Activated CD8-positive, alpha-beta T cell treated with anti-CD3 and anti-CD28 coated beads, Interleukin-2, amount 10 ng/mL, durations not matched to agents 7 days and 5 days (primary cell): ENCODE measurements at regions of chr12 and their contacts with region 1.

Region 1: GRCh38 chr12:46124848-46125619 is 134.7 kb upstream of the SCAF11 start:
- DNase-seq: peak; percentile 78
- ATAC-seq: peak; percentile 87
- H3K4me3 Mint-ChIP-seq: no peak overlapping the region
- H3K27ac Mint-ChIP-seq: no peak overlapping the region
- H3K4me1 Mint-ChIP-seq: peaks cover 7% of the 10 kb centered on the region
- H3K27me3 Mint-ChIP-seq: peaks cover 29% of the 10 kb centered on the region

Region 2: GRCh38 chr12:45010059-45010458 is 1115.0 kb before region 1 on chr12:
- CTCF ChIA-PET with region 1: no interaction called
- POLR2A ChIA-PET with region 1: no interaction called
- DNase-seq: no peak
- ATAC-seq: no peak
- H3K4me3 Mint-ChIP-seq: no peak overlapping the region
- H3K27ac Mint-ChIP-seq: no peak overlapping the region
- H3K4me1 Mint-ChIP-seq: no peaks in the 10 kb centered on the region
- H3K27me3 Mint-ChIP-seq: peaks cover 7% of the 10 kb centered on the region

Region 3: DNA sequence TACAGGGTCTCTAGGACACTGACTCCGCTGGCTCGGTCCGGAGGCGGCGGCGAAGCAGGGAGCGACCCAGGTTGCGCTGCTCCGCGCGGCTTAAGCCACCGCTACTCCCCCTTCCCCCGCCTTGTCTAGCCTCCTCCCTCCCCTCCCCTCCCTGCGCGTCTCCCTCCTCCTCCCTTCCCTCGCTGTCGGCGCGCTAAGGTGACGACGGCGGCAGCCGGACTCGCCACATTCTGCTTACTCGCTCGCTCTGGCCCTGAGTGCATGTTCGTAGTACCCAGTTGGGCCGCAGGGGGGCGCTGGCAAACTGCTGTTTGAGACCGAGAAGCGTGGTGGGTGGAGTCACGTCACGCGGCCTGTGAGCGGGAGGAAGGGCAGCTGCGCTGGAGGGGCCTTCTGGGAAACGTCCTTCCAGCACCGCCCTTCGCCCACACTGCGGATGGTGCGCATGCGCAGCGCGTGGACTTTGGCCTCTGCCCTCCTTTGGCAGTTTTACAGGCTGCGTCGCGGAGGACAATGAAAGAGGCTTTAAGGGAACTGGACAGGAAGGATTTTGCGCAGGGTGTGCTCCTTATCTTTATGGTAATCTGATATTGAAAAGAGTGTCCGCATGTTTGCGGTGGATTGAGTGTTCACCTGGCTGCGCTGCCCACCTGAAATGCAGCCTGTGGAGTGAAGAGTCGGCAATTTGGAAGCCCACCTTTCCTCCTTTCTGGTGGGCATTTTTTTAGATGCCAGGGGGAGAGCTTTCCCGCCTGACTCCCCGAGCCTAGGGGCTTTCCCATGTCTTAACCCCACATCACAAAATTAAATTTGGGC is 134.4 kb before region 1 on chr12 and contains the start of gene SCAF11:
- CTCF ChIA-PET with region 1: interaction called, 21 read pairs
- POLR2A ChIA-PET with region 1: no interaction called
- DNase-seq: peak; percentile 100
- ATAC-seq: peak; percentile 83
- H3K4me3 Mint-ChIP-seq: peak within 1 kb of the TSS; percentile 95
- H3K27ac Mint-ChIP-seq: peak within 1 kb of the TSS; percentile 99
- H3K4me1 Mint-ChIP-seq: peaks cover 46% of the 10 kb centered on the region
- H3K27me3 Mint-ChIP-seq: peaks cover 5% of the 10 kb centered on the region
- total RNA-seq, gene SCAF11: 131 to 134 TPM

Region 4: DNA sequence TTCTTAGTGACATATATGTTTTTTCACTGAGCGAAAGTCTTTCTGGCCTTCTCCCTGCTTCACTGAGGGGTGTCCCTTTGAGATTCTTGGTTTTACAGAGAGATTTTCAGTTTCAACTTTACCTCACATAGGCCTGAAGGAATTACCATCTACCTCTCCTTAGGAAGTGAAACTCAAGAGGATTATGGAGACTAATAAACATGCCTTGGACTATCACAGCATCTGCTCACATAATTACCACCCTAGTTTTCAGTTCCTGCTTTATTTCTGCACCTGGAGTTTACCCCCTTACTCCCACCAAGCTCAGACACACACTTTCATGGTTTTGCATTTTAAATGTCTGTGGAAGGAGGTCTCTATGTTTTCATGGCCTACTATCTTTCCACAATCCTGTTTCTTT is 16.3 kb before region 1 on chr12:
- CTCF ChIA-PET with region 1: interaction called, 21 read pairs
- POLR2A ChIA-PET with region 1: no interaction called
- DNase-seq: no peak
- ATAC-seq: no peak
- H3K4me3 Mint-ChIP-seq: no peak overlapping the region
- H3K27ac Mint-ChIP-seq: no peak overlapping the region
- H3K4me1 Mint-ChIP-seq: no peaks in the 10 kb centered on the region
- H3K27me3 Mint-ChIP-seq: peaks cover 5% of the 10 kb centered on the region

Region 5: DNA sequence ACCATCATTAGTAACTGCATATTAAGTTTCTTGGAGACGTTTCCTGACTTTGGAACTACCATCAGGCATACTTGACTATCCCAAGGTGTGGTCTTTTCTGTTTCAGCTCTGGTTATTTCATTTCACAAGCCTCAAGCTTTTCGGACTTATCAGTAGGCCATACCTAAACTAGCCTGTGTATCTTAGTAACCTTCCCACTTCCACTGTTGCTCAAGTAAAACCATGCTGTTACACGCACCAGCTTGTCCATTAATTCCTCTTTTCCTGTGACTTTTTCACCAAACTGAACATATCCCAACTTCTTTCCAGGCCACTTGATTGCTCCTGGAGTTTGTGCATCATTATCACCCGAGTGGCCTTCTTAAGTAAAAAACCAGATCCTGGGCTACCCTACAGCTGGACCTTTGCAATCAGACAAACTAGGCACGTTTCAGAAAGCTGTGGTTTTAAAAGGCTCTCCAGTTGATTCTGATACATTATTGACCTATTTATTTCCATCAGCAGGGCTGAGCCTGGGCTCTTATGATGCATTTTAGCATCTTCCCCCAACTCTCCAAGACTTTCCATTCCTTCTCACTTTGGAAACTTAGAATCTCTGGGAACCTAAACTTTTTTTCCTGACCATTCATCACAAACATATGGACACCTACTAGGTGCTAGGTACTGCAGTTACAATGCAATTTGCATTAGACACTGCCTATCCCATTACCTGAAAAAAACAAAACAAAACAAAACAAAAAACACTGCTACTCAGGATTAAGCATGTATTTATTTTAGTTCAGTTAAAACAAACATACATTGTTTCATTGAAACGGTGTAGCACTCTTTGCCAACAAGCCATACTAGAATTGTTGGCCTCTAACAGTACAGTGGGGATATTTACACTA is 232.6 kb after region 1 on chr12:
- CTCF ChIA-PET with region 1: interaction called, 15 read pairs
- POLR2A ChIA-PET with region 1: no interaction called
- DNase-seq: no peak
- ATAC-seq: no peak
- H3K4me3 Mint-ChIP-seq: no peak overlapping the region
- H3K27ac Mint-ChIP-seq: no peak overlapping the region
- H3K4me1 Mint-ChIP-seq: peaks cover 29% of the 10 kb centered on the region
- H3K27me3 Mint-ChIP-seq: no peaks in the 10 kb centered on the region

Region 6: GRCh38 chr12:46675736-46676135 is 550.7 kb after region 1 on chr12:
- CTCF ChIA-PET with region 1: interaction called, 21 read pairs
- POLR2A ChIA-PET with region 1: no interaction called
- DNase-seq: no peak
- ATAC-seq: no peak
- H3K4me3 Mint-ChIP-seq: no peak overlapping the region
- H3K27ac Mint-ChIP-seq: no peak overlapping the region
- H3K4me1 Mint-ChIP-seq: no peaks in the 10 kb centered on the region
- H3K27me3 Mint-ChIP-seq: no peaks in the 10 kb centered on the region

Region 7: DNA sequence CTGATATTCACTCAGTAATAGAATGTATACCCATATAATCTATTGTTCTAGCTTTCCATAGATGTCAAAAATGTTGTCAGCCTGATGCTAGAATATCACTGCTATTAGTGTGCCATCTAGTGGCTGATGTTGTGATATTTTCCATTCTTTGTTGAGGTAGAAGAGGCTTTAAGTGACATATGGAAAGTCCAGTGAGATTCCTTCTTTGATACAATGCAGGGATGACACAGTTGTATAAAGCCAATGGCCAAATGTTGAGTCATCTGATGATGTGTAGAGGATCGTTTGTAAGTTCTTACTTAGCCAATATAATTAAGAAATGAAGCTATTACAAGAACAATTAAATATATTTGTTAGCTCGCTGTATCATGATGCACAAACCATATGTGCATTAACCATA is 896.3 kb after region 1 on chr12:
- CTCF ChIA-PET with region 1: interaction called, 50 read pairs
- POLR2A ChIA-PET with region 1: no interaction called
- DNase-seq: peak; percentile 41
- ATAC-seq: peak; percentile 53
- H3K4me3 Mint-ChIP-seq: no peak overlapping the region
- H3K27ac Mint-ChIP-seq: no peak overlapping the region
- H3K4me1 Mint-ChIP-seq: no peaks in the 10 kb centered on the region
- H3K27me3 Mint-ChIP-seq: peaks cover 34% of the 10 kb centered on the region